CD4-positive, alpha-beta T cell (primary cell): ENCODE measurements at regions of chr11 and their contacts with region 1.

Region 1: DNA sequence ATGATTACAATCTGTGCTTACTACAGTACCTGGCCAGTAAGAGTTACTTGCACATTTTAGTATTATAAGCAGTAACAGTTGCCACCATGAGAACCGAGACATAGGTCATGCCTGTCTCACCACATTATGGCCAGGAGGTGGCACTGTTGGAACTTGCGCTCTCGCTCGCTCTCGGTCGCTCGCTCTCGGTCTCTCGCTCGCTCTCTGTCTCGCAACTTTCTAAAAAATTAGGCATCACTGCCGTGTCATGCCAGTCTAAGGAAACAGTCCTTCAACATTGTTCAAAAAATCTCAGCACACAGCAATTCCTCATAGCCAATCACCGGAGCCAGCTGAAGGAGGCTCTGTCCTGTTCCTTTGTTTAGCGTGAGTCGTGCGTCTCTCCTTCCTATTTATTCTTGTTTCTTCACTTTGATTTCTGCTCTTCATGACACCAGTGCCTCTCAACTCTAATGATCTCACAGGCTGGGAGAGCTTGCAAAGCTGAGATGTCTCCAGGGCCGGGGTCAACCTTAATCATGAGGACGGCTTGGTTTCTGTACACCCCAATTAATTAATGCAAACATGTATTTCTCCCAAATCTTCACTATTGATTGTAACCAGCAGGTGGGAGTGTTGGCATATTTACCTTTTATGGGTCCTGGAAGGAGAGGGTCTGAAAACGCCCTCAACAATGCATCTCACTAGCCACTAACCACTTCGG is 6.3 kb upstream of the ADAMTS8 start:
- DNase-seq: peak; percentile 43 to 86 (median 53)
- ATAC-seq: peak; percentile 87
- H3K4me3 ChIP-seq: peak overlapping the region; percentile 68
- H3K4me3 Mint-ChIP-seq: no peak overlapping the region
- H3K27ac ChIP-seq: no peak overlapping the region
- H3K27ac Mint-ChIP-seq: no peak overlapping the region
- H3K4me1 ChIP-seq: peaks cover 11% of the 10 kb centered on the region
- H3K4me1 Mint-ChIP-seq: peaks cover 16% of the 10 kb centered on the region
- H3K27me3 ChIP-seq: peaks cover 11 to 17% of the 10 kb centered on the region in 2 experiments
- H3K27me3 Mint-ChIP-seq: peaks cover 19% of the 10 kb centered on the region
- CTCF ChIP-seq: peak; percentile 88

Region 2: DNA sequence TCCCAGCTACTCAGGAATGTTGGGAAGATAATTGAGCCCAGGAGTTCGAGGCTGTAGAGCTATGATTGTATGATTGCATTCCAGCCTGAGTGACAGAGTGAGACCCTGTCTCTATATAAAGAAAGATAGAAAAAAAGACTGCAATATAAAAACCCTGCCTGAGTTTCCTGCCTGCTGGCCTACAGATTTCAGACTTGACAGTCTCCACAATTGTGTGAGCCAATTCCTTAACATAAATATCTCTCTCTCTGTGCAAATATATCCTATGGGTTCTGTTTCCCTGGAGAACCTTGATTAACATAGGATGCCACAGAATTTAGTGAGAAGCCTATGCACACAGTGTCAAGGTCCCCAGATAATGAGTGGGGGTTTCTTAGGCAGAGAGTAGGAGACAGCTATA is 87.4 kb before region 1 on chr11:
- CTCF ChIA-PET with region 1: no interaction called
- POLR2A ChIA-PET with region 1: no interaction called
- intact Hi-C with region 1: no loop called
- DNase-seq: no peak
- ATAC-seq: no peak
- H3K4me3 ChIP-seq: no peak overlapping the region
- H3K4me3 Mint-ChIP-seq: no peak overlapping the region
- H3K27ac ChIP-seq: no peak overlapping the region
- H3K27ac Mint-ChIP-seq: no peak overlapping the region
- H3K4me1 ChIP-seq: no peaks in the 10 kb centered on the region
- H3K4me1 Mint-ChIP-seq: no peaks in the 10 kb centered on the region
- H3K27me3 ChIP-seq: no peaks in the 10 kb centered on the region
- H3K27me3 Mint-ChIP-seq: no peaks in the 10 kb centered on the region
- CTCF ChIP-seq: no peak

Region 3: GRCh38 chr11:130861902-130862860 is 427.5 kb after region 1 on chr11:
- CTCF ChIA-PET with region 1: interaction called, 13 read pairs
- POLR2A ChIA-PET with region 1: no interaction called
- intact Hi-C with region 1: loop called (anchors 1 kb)
- DNase-seq: peak; percentile 73 to 94 (median 84)
- ATAC-seq: peak; percentile 94
- H3K4me3 ChIP-seq: no peak overlapping the region
- H3K4me3 Mint-ChIP-seq: no peak overlapping the region
- H3K27ac ChIP-seq: no peak overlapping the region
- H3K27ac Mint-ChIP-seq: no peak overlapping the region
- H3K4me1 ChIP-seq: peaks cover 7% of the 10 kb centered on the region
- H3K4me1 Mint-ChIP-seq: no peaks in the 10 kb centered on the region
- H3K27me3 ChIP-seq: no peaks in the 10 kb centered on the region
- H3K27me3 Mint-ChIP-seq: peaks cover 2% of the 10 kb centered on the region
- CTCF ChIP-seq: peak; percentile 100

Region 4: DNA sequence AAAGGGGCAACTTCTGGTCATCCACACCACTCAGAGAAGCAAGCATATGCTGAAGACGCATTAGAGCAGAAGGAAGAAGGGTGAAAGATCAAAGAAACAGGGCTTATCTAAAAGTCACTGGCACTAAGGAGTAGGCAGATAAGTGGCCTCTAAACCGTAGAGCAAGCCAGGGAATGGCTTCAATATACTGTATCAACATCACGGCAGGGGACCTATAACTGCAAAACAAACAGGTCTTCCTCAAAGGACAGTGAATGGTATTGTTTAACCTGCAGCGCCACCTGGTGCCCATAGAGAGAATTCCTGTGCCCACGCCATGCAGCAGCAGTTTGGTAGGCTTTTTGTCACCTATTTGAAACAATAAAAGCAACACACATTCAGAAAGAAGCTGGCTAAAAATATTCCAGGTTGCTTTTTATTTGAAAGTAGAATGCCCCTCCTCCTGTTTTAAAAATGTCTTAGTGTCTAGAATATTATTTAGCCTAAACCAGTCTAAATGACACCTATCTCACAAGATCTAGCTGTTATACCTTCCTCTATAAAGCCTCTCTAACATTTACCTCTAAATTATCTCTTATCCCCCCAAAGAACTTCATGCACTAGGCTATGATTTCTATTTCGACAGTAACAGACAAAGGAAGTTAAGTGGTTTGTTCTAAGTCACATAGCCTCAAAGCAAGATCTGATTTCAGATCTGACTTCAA is 459.8 kb after region 1 on chr11:
- CTCF ChIA-PET with region 1: interaction called, 5 read pairs
- POLR2A ChIA-PET with region 1: no interaction called
- intact Hi-C with region 1: loop called (anchors 1 to 10 kb)
- DNase-seq: peak; percentile 29 to 82 (median 58)
- ATAC-seq: peak; percentile 95
- H3K4me3 ChIP-seq: no peak overlapping the region
- H3K4me3 Mint-ChIP-seq: no peak overlapping the region
- H3K27ac ChIP-seq: no peak overlapping the region
- H3K27ac Mint-ChIP-seq: peak overlapping the region; percentile 24
- H3K4me1 ChIP-seq: no peaks in the 10 kb centered on the region
- H3K4me1 Mint-ChIP-seq: peaks cover 8% of the 10 kb centered on the region
- H3K27me3 ChIP-seq: no peaks in the 10 kb centered on the region
- H3K27me3 Mint-ChIP-seq: no peaks in the 10 kb centered on the region
- CTCF ChIP-seq: peak; percentile 93